ENCODE measurements at regions of chr18 and their contacts with region 1.

Region 1: DNA sequence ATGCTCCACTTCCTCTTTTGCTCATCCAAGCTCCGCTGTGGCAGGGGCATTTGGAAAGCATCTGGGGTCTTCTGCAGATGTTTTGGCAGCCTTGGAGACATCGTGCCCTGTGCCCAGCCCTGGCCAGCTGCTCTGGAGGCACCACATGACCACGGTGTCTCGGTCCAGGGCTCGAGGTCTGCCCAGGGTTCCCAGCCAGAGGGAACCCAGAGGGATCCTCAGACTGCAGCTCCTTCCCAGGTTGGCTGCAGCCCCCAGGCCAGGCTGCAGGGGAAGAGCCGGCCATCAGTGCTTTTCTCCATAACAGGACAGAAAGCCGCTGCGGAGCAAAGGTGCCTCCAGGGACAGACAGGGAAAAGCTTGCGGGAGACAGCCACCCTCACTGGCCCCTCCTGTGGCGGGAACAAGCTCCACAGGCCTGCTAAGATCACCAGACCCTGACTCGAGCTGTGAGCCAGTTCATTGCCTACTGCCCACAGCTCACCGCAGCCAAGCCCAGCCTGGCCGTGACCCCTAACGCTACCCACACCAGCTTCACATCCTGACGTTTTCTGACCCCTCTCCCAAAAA is 74.7 kb downstream of the SMAD7 start:
- DNase-seq: no peak
- H3K4me3 ChIP-seq: no peak overlapping the region
- H3K4me3 Mint-ChIP-seq: no peak overlapping the region
- H3K27ac ChIP-seq: no peak overlapping the region
- H3K27ac Mint-ChIP-seq: peak overlapping the region in 2 of 7 donors; percentile 21 to 37
- H3K4me1 ChIP-seq: peaks cover 8 to 18% of the 10 kb centered on the region in 2 donors
- H3K4me1 Mint-ChIP-seq: peaks cover 31% of the 10 kb centered on the region
- H3K27me3 ChIP-seq: no peaks in the 10 kb centered on the region
- H3K27me3 Mint-ChIP-seq: peaks cover 2 to 17% (median 12%) of the 10 kb centered on the region in 3 donors
- CTCF ChIP-seq: no peak

Region 2: GRCh38 chr18:48896690-48897511 is 20.9 kb after region 1 on chr18:
- intact Hi-C with region 1: loop called in 1 of 2 experiments (anchors 2 kb)
- DNase-seq: peak; percentile 99 to 100 (median 100)
- H3K4me3 ChIP-seq: peak overlapping the region in 1 of 3 experiments; percentile 50
- H3K4me3 Mint-ChIP-seq: peak overlapping the region; percentile 56 to 74
- H3K27ac ChIP-seq: peak overlapping the region; percentile 90 to 93
- H3K27ac Mint-ChIP-seq: peak overlapping the region; percentile 93 to 99 (median 97)
- H3K4me1 ChIP-seq: peaks cover 43 to 47% of the 10 kb centered on the region in 2 donors
- H3K4me1 Mint-ChIP-seq: peaks cover 48% of the 10 kb centered on the region
- H3K27me3 ChIP-seq: no peaks in the 10 kb centered on the region
- H3K27me3 Mint-ChIP-seq: no peaks in the 10 kb centered on the region
- CTCF ChIP-seq: peak; percentile 55